ENCODE measurements at regions of chr11 and their contacts with region 1.

Region 1: GRCh38 chr11:132278801-132279574 is 908.6 kb downstream of the NTM start:
- DNase-seq: no peak
- H3K4me3 ChIP-seq: no peak overlapping the region
- H3K27ac ChIP-seq: no peak overlapping the region
- H3K4me1 ChIP-seq: peaks cover 2 to 8% (median 3%) of the 10 kb centered on the region in 4 experiments; a peak in 5 of 7 replicates
- H3K27me3 ChIP-seq: no peaks in the 10 kb centered on the region; a peak in 1 of 7 replicates
- CTCF ChIP-seq: peak in 2 of 3 experiments; percentile 61 to 74; a peak in 3 of 4 replicates
- EP300 ChIP-seq: no peak
- POLR2A ChIP-seq: no peak
- RAD21 ChIP-seq: peak; percentile 69 to 79

Region 2: DNA sequence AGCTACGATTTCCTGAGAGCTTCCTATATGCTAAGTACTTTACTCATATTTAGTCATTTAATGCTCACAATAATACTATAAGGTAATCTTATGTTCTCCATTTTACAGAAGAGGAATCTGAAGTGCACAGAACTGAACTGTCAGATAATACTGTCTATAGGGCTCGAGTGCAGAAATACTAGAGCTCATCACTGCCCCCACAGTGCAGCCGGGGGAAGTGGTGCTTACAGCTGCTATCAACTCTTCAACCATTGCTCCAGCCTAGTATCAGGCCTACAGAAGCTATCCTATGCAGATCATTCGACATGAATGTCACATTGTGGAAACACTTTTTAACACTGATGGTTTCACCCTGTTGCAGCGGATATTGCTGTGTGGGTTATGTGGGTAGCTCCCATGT is 21.3 kb after region 1 on chr11:
- CTCF ChIA-PET with region 1: interaction called, 122 read pairs
- POLR2A ChIA-PET with region 1: no interaction called
- DNase-seq: no peak
- H3K4me3 ChIP-seq: no peak overlapping the region
- H3K27ac ChIP-seq: no peak overlapping the region
- H3K4me1 ChIP-seq: no peaks in the 10 kb centered on the region
- H3K27me3 ChIP-seq: no peaks in the 10 kb centered on the region
- CTCF ChIP-seq: peak; percentile 54 to 76 (median 64)
- EP300 ChIP-seq: no peak
- POLR2A ChIP-seq: no peak
- RAD21 ChIP-seq: peak; percentile 36 to 51; a peak in 2 of 4 replicates

Region 3: GRCh38 chr11:132335311-132335710 is 56.3 kb after region 1 on chr11:
- CTCF ChIA-PET with region 1: no interaction called
- POLR2A ChIA-PET with region 1: no interaction called
- DNase-seq: no peak
- H3K4me3 ChIP-seq: no peak overlapping the region
- H3K27ac ChIP-seq: no peak overlapping the region
- H3K4me1 ChIP-seq: peaks cover 0 to 7% (median 3%) of the 10 kb centered on the region in 4 experiments; a peak in 3 of 7 replicates
- H3K27me3 ChIP-seq: peaks cover 0 to 6% (median under 1%) of the 10 kb centered on the region in 4 experiments; a peak in 4 of 7 replicates
- CTCF ChIP-seq: no peak
- EP300 ChIP-seq: no peak
- POLR2A ChIP-seq: no peak
- RAD21 ChIP-seq: no peak; a peak in 1 of 4 replicates

Region 4: GRCh38 chr11:132402071-132402684 is 123.2 kb after region 1 on chr11:
- CTCF ChIA-PET with region 1: interaction called, 12 read pairs
- POLR2A ChIA-PET with region 1: no interaction called
- DNase-seq: peak; percentile 46 to 64
- H3K4me3 ChIP-seq: no peak overlapping the region
- H3K27ac ChIP-seq: no peak overlapping the region
- H3K4me1 ChIP-seq: peaks cover 0 to 12% (median 4%) of the 10 kb centered on the region in 4 experiments; a peak in 6 of 7 replicates
- H3K27me3 ChIP-seq: peaks cover 0 to 4% (median 0%) of the 10 kb centered on the region in 4 experiments; a peak in 4 of 7 replicates
- CTCF ChIP-seq: peak; percentile 69 to 86 (median 85)
- EP300 ChIP-seq: no peak
- POLR2A ChIP-seq: no peak
- RAD21 ChIP-seq: peak; percentile 89 to 94